ENCODE measurements at regions of chr19 and their contacts with region 1.

Region 1: GRCh38 chr19:43595999-43596841 is at the starts of genes IRGQ and ZNF576:
- DNase-seq: peak; percentile 99
- ATAC-seq: peak; percentile 82
- H3K4me3 ChIP-seq: peak within 1 kb of the TSS; percentile 68
- H3K27ac ChIP-seq: peak within 1 kb of the TSS; percentile 79
- H3K4me1 ChIP-seq: peaks cover 9% of the 10 kb centered on the region
- H3K27me3 ChIP-seq: no peaks in the 10 kb centered on the region
- CTCF ChIP-seq: 0 out of 2 replicates have a peak, but pooled peaks have one; percentile 3
- POLR2A ChIP-seq: peak; percentile 78
- RAD21 ChIP-seq: peak; percentile 18; the same call in 1 of the 2 replicates
- total RNA-seq, gene IRGQ: 9.0 and 10.8 TPM in 2 replicates
- total RNA-seq, gene ZNF576: 8.6 and 13.8 TPM in 2 replicates

Region 2: GRCh38 chr19:43354305-43354627 is 242.0 kb before region 1 on chr19:
- CTCF ChIA-PET with region 1: no interaction called
- POLR2A ChIA-PET with region 1: no interaction called
- dilution Hi-C with region 1: no loop called
- in situ Hi-C with region 1: no loop called
- intact Hi-C with region 1: no loop called
- DNase-seq: no peak
- ATAC-seq: no peak
- H3K4me3 ChIP-seq: no peak overlapping the region
- H3K27ac ChIP-seq: no peak overlapping the region
- H3K4me1 ChIP-seq: no peaks in the 10 kb centered on the region
- H3K27me3 ChIP-seq: peaks cover 27% of the 10 kb centered on the region
- CTCF ChIP-seq: no peak
- POLR2A ChIP-seq: no peak
- RAD21 ChIP-seq: no peak

Region 3: GRCh38 chr19:43533546-43534304 is 62.5 kb before region 1 on chr19:
- CTCF ChIA-PET with region 1: no interaction called
- POLR2A ChIA-PET with region 1: interaction called, 8 read pairs
- dilution Hi-C with region 1: no loop called
- in situ Hi-C with region 1: no loop called
- intact Hi-C with region 1: loop called (anchors 2 kb)
- DNase-seq: peak; percentile 99
- ATAC-seq: peak; percentile 91
- H3K4me3 ChIP-seq: peak overlapping the region; percentile 55
- H3K27ac ChIP-seq: peak overlapping the region; percentile 42
- H3K4me1 ChIP-seq: peaks cover 3% of the 10 kb centered on the region; the same call in 1 of the 2 replicates
- H3K27me3 ChIP-seq: no peaks in the 10 kb centered on the region
- CTCF ChIP-seq: no peak
- POLR2A ChIP-seq: no peak
- RAD21 ChIP-seq: no peak

Region 4: GRCh38 chr19:43560687-43561086 is 35.5 kb before region 1 on chr19:
- CTCF ChIA-PET with region 1: interaction called, 29 read pairs
- POLR2A ChIA-PET with region 1: no interaction called
- dilution Hi-C with region 1: no loop called
- in situ Hi-C with region 1: no loop called
- intact Hi-C with region 1: loop called (anchors 2 kb)
- DNase-seq: peak; percentile 52
- ATAC-seq: peak; percentile 25; the same call in 1 of the 2 replicates
- H3K4me3 ChIP-seq: no peak overlapping the region
- H3K27ac ChIP-seq: no peak overlapping the region
- H3K4me1 ChIP-seq: peaks cover 5% of the 10 kb centered on the region
- H3K27me3 ChIP-seq: no peaks in the 10 kb centered on the region
- CTCF ChIP-seq: 0 out of 2 replicates have a peak, but pooled peaks have one; percentile 9
- POLR2A ChIP-seq: no peak
- RAD21 ChIP-seq: no peak

Region 5: GRCh38 chr19:43619262-43620060 is 23.2 kb after region 1 on chr19 and contains the start of gene ZNF428:
- CTCF ChIA-PET with region 1: no interaction called
- POLR2A ChIA-PET with region 1: no interaction called
- dilution Hi-C with region 1: no loop called
- in situ Hi-C with region 1: no loop called
- intact Hi-C with region 1: no loop called
- DNase-seq: peak; percentile 88
- ATAC-seq: peak; percentile 97
- H3K4me3 ChIP-seq: peak within 1 kb of the TSS; percentile 66
- H3K27ac ChIP-seq: peak within 1 kb of the TSS; percentile 77
- H3K4me1 ChIP-seq: peaks cover 6% of the 10 kb centered on the region
- H3K27me3 ChIP-seq: no peaks in the 10 kb centered on the region
- CTCF ChIP-seq: no peak
- POLR2A ChIP-seq: peak; percentile 76
- RAD21 ChIP-seq: no peak
- total RNA-seq, gene ZNF428: 9.9 and 10.3 TPM in 2 replicates

Region 6: GRCh38 chr19:43651758-43652545 is 55.7 kb after region 1 on chr19:
- CTCF ChIA-PET with region 1: no interaction called
- POLR2A ChIA-PET with region 1: no interaction called
- dilution Hi-C with region 1: no loop called
- in situ Hi-C with region 1: no loop called
- intact Hi-C with region 1: loop called (anchors 2 kb)
- DNase-seq: peak; percentile 65
- ATAC-seq: peak; percentile 95
- H3K4me3 ChIP-seq: no peak overlapping the region
- H3K27ac ChIP-seq: no peak overlapping the region
- H3K4me1 ChIP-seq: no peaks in the 10 kb centered on the region
- H3K27me3 ChIP-seq: no peaks in the 10 kb centered on the region
- CTCF ChIP-seq: peak; percentile 67
- POLR2A ChIP-seq: no peak
- RAD21 ChIP-seq: peak; percentile 62

Measured in IMR-90 (cell line).